ENCODE measurements at regions of chr3 and their contacts with region 1.

Region 1: GRCh38 chr3:46829699-46830208 is 33.5 kb downstream of the MYL3 start:
- DNase-seq: peak in 7 of 35 experiments; percentile 10 to 31 (median 23)
- ATAC-seq: peak in 3 of 4 experiments; percentile 48 to 56 (median 49)
- H3K4me3 ChIP-seq: no peak overlapping the region
- H3K4me3 Mint-ChIP-seq: no peak overlapping the region
- H3K27ac ChIP-seq: no peak overlapping the region
- H3K27ac Mint-ChIP-seq: no peak overlapping the region
- H3K4me1 ChIP-seq: peaks cover 0 to 4% of the 10 kb centered on the region in 2 experiments
- H3K4me1 Mint-ChIP-seq: peaks cover 0 to 2% (median 0%) of the 10 kb centered on the region in 3 donors
- H3K27me3 ChIP-seq: peaks cover 0 to 4% of the 10 kb centered on the region in 2 experiments
- H3K27me3 Mint-ChIP-seq: peaks cover 0 to 1% of the 10 kb centered on the region in 2 donors

Region 2: DNA sequence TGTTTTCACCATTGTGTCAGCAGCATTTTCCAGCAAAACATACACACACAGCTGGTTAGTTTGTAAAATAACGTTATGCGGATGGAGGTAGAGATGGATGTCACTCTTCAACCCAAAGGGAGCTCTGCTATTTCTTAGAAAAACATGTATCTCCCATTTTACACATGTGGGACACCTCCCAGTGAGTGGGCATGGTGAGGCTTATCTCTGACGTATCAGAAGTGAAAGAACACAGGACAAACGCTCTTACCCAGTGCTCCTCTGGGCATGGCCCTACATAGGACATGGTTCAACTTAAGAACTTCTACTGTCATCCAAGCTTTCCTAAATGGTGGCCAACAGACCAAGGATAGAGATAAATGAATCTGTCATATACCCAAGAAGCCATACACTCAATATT is 215.3 kb before region 1 on chr3:
- CTCF ChIA-PET with region 1: interaction called in 1 of 2 experiments, 10 read pairs
- POLR2A ChIA-PET with region 1: no interaction called
- DNase-seq: no peak
- ATAC-seq: no peak
- H3K4me3 ChIP-seq: no peak overlapping the region
- H3K4me3 Mint-ChIP-seq: no peak overlapping the region
- H3K27ac ChIP-seq: no peak overlapping the region
- H3K27ac Mint-ChIP-seq: no peak overlapping the region
- H3K4me1 ChIP-seq: no peaks in the 10 kb centered on the region
- H3K4me1 Mint-ChIP-seq: no peaks in the 10 kb centered on the region
- H3K27me3 ChIP-seq: peaks cover 0 to 35% of the 10 kb centered on the region in 2 experiments
- H3K27me3 Mint-ChIP-seq: peaks cover 15 to 25% of the 10 kb centered on the region in 2 donors

Region 3: DNA sequence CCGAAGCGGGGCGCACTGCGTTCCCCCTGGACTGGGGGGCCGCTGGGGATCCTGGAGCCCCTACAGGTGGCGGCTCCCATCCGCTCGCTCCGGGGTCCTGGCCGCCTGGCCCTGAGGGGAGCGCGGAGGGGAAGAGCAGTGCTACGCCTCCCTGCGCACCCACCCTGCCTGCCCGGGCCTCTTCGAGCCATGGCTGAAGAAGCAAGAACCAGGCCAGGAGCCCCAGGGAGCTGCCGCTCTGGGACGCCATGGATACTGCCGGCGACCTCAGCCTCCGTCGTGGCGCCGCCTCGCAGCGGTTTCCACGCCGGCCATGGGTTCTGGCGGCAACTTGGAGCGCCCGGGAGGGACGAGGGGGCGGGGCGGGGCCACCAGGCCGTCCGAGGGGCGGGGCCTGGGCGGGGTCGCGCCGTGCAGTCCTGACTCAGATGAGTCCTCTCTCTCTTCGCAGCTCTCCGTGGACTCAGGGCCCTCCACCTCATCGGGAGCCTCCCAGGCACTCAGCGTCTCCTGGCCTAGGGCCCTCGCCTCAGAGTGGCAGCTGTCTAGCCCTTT is 17.4 kb before region 1 on chr3:
- CTCF ChIA-PET with region 1: no interaction called
- POLR2A ChIA-PET with region 1: no interaction called
- DNase-seq: peak in 34 of 35 experiments; percentile 17 to 75 (median 52)
- ATAC-seq: peak; percentile 90 to 95 (median 93)
- H3K4me3 ChIP-seq: peak overlapping the region; percentile 48 to 73
- H3K4me3 Mint-ChIP-seq: peak overlapping the region; percentile 67 to 78 (median 73)
- H3K27ac ChIP-seq: no peak overlapping the region
- H3K27ac Mint-ChIP-seq: no peak overlapping the region
- H3K4me1 ChIP-seq: peaks cover 4 to 15% of the 10 kb centered on the region in 2 experiments
- H3K4me1 Mint-ChIP-seq: peaks cover 6 to 23% (median 13%) of the 10 kb centered on the region in 3 donors
- H3K27me3 ChIP-seq: peaks cover 0 to 9% of the 10 kb centered on the region in 2 experiments
- H3K27me3 Mint-ChIP-seq: peaks cover 0 to 6% of the 10 kb centered on the region in 2 donors

Measured in T-cell (primary cell).